ENCODE measurements at regions of chr7 and their contacts with region 1.

Region 1: GRCh38 chr7:35694781-35695472 is at the start of gene HERPUD2:
- DNase-seq: peak; percentile 92 to 96
- ATAC-seq: peak; percentile 96 to 97 (median 97)
- H3K4me3 ChIP-seq: peak within 1 kb of the TSS; percentile 96
- H3K27ac ChIP-seq: peak within 1 kb of the TSS; percentile 96
- H3K4me1 ChIP-seq: peaks cover 32% of the 10 kb centered on the region
- H3K27me3 ChIP-seq: no peaks in the 10 kb centered on the region
- CTCF ChIP-seq: no peak
- total RNA-seq, gene HERPUD2: 12.5 to 21.5 (median 16.4) TPM

Region 2: GRCh38 chr7:35647171-35647574 is 47.8 kb before region 1 on chr7:
- intact Hi-C with region 1: loop called in 1 of 2 experiments (anchors 10 kb)
- DNase-seq: no peak
- ATAC-seq: peak; percentile 66 to 74 (median 70)
- H3K4me3 ChIP-seq: no peak overlapping the region
- H3K27ac ChIP-seq: peak overlapping the region; percentile 73
- H3K4me1 ChIP-seq: peaks cover 48% of the 10 kb centered on the region
- H3K27me3 ChIP-seq: no peaks in the 10 kb centered on the region
- CTCF ChIP-seq: no peak

Region 3: DNA sequence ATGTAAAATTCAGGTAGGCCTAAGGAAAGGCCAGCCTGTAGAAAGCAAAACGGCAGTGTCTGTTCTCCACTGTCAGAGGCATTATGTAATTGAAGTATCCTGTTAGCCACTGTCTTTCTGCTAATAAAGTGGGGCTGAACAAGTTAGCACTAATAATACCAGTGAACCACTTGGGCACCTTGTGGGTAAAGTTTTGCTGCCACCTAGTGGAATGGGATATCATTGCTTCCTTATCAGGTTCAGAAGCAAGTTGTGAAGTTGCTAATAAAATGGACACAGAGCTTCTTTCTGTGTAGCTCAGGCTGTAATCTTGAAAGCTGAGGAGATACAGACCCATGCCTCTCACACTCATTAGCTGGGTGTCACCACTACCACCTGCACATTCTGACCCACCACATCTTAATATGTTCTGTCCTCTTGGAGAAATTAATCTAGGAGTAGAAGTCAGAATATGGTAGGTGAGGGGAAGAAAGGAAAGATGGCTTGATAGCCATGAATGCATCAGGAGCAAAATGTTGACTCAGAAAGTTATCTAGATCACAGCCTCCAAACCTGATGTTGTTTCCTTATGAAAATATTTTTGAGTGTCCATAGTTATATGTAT is 281.0 kb after region 1 on chr7:
- intact Hi-C with region 1: loop called in 1 of 2 experiments (anchors 10 kb)
- DNase-seq: no peak
- ATAC-seq: peak; percentile 72 to 95 (median 86)
- H3K4me3 ChIP-seq: no peak overlapping the region
- H3K27ac ChIP-seq: no peak overlapping the region
- H3K4me1 ChIP-seq: no peaks in the 10 kb centered on the region
- H3K27me3 ChIP-seq: peaks cover 3 to 8% (median 4%) of the 10 kb centered on the region in 3 donors
- CTCF ChIP-seq: peak; percentile 84

Region 4: GRCh38 chr7:36904802-36905201 is 1209.9 kb after region 1 on chr7:
- intact Hi-C with region 1: no loop called
- DNase-seq: no peak
- ATAC-seq: no peak
- H3K4me3 ChIP-seq: no peak overlapping the region
- H3K27ac ChIP-seq: no peak overlapping the region
- H3K4me1 ChIP-seq: no peaks in the 10 kb centered on the region
- H3K27me3 ChIP-seq: no peaks in the 10 kb centered on the region
- CTCF ChIP-seq: no peak